ENCODE measurements at regions of chr3 and their contacts with region 1.

Region 1: DNA sequence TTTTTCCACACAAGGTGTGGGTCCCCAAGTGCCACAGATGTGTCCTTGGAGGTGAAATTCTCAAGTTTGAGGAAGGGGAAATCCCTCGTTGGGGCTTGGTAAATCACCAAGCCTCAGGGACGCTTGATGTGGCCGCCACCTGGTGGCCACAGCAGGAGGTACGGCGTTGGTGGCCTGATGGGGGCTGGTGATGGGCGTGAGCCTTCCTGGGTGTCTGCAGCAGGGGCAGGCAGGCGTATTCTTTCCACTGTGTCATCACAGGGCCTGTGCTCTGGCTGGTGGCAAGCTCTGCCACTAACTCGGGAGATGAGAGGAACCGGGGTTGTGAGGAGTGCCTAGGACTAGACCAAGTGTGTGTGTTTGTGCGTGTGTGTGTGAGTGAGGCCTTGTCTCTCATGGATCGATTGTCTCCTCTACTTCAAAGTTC is 4.2 kb downstream of the ACOX2 start:
- DNase-seq: peak; percentile 71 to 79 (median 75)
- H3K4me3 ChIP-seq: no peak overlapping the region
- H3K4me3 Mint-ChIP-seq: no peak overlapping the region
- H3K27ac ChIP-seq: no peak overlapping the region
- H3K27ac Mint-ChIP-seq: peak overlapping the region in 6 of 7 donors; percentile 16 to 87 (median 69)
- H3K4me1 ChIP-seq: peaks cover 9% of the 10 kb centered on the region
- H3K4me1 Mint-ChIP-seq: peaks cover 4 to 8% (median 7%) of the 10 kb centered on the region in 4 donors
- H3K27me3 ChIP-seq: no peaks in the 10 kb centered on the region
- H3K27me3 Mint-ChIP-seq: no peaks in the 10 kb centered on the region

Region 2: DNA sequence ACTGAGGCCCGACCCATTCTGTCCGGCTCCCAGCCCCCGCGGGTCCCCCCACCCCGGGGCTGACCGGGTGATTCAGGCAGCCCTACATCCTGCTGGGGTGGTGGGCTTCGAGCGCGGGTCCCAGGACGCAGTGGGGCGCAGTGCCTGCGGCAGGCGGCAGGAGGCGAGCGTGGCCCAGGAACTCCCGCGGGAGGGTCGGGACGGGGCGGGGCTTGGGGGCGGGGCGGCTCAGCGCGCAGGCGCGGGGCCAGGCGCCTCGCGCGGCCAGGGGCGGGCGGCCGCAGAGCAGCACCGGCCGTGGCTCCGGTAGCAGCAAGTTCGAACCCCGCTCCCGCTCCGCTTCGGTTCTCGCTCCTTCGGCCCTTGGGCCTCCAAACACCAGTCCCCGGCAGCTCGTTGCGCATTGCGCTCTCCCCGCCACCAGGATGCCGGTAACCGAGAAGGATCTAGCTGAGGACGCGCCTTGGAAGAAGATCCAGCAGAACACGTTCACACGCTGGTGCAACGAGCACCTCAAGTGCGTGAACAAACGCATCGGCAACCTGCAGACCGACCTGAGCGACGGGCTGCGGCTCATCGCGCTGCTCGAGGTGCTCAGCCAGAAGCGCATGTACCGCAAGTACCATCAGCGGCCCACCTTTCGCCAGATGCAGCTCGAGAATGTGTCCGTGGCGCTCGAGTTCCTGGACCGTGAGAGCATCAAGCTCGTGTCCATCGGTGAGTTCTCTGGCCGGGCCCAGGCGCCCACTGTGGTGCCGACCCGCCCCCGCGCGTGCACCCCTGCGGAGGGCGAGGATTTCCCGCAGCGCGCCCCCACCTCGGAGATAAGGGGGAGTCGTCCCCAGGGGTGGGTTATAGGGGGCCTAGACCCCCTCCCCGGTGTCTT is 524.4 kb before region 1 on chr3 and contains the start of gene FLNB:
- CTCF ChIA-PET with region 1: no interaction called
- POLR2A ChIA-PET with region 1: no interaction called
- intact Hi-C with region 1: no loop called
- DNase-seq: peak; percentile 72 to 78 (median 75)
- H3K4me3 ChIP-seq: peak within 1 kb of the TSS; percentile 65 to 100
- H3K4me3 Mint-ChIP-seq: peak within 1 kb of the TSS; percentile 83 to 94 (median 90)
- H3K27ac ChIP-seq: peak within 1 kb of the TSS; percentile 51
- H3K27ac Mint-ChIP-seq: peak within 1 kb of the TSS; percentile 47 to 92 (median 88)
- H3K4me1 ChIP-seq: peaks cover 31% of the 10 kb centered on the region
- H3K4me1 Mint-ChIP-seq: peaks cover 19 to 48% (median 30%) of the 10 kb centered on the region in 4 donors
- H3K27me3 ChIP-seq: no peaks in the 10 kb centered on the region
- H3K27me3 Mint-ChIP-seq: no peaks in the 10 kb centered on the region
- total RNA-seq, gene FLNB: 22.5 to 28.5 TPM

Region 3: GRCh38 chr3:58237238-58237940 is 295.4 kb before region 1 on chr3 and contains the start of gene ABHD6:
- CTCF ChIA-PET with region 1: no interaction called
- POLR2A ChIA-PET with region 1: no interaction called
- intact Hi-C with region 1: loop called (anchors 2 kb)
- DNase-seq: peak; percentile 72 to 93 (median 88)
- H3K4me3 ChIP-seq: peak within 1 kb of the TSS; percentile 58
- H3K4me3 Mint-ChIP-seq: peak within 1 kb of the TSS; percentile 88 to 96 (median 92)
- H3K27ac ChIP-seq: peak within 1 kb of the TSS; percentile 62
- H3K27ac Mint-ChIP-seq: peak within 1 kb of the TSS; percentile 85 to 92 (median 91)
- H3K4me1 ChIP-seq: peaks cover 12% of the 10 kb centered on the region
- H3K4me1 Mint-ChIP-seq: peaks cover 7 to 21% (median 12%) of the 10 kb centered on the region in 4 donors
- H3K27me3 ChIP-seq: no peaks in the 10 kb centered on the region
- H3K27me3 Mint-ChIP-seq: peaks cover 3 to 4% of the 10 kb centered on the region in 2 donors
- total RNA-seq, gene ABHD6: 5.1 to 7.2 TPM

Region 4: GRCh38 chr3:58324391-58325390 is 208.1 kb before region 1 on chr3:
- CTCF ChIA-PET with region 1: interaction called, 15 read pairs
- POLR2A ChIA-PET with region 1: no interaction called
- intact Hi-C with region 1: loop called (anchors 1 kb)
- DNase-seq: peak; percentile 15 to 51 (median 39)
- H3K4me3 ChIP-seq: no peak overlapping the region
- H3K4me3 Mint-ChIP-seq: peak overlapping the region in 1 of 8 donors; percentile 7
- H3K27ac ChIP-seq: no peak overlapping the region
- H3K27ac Mint-ChIP-seq: peak overlapping the region; percentile 76 to 87 (median 79)
- H3K4me1 ChIP-seq: peaks cover 18% of the 10 kb centered on the region
- H3K4me1 Mint-ChIP-seq: peaks cover 7 to 25% (median 17%) of the 10 kb centered on the region in 4 donors
- H3K27me3 ChIP-seq: no peaks in the 10 kb centered on the region
- H3K27me3 Mint-ChIP-seq: no peaks in the 10 kb centered on the region

Region 5: GRCh38 chr3:58463181-58463941 is 69.4 kb before region 1 on chr3:
- CTCF ChIA-PET with region 1: interaction called, 8 read pairs
- POLR2A ChIA-PET with region 1: interaction called, 3 read pairs
- intact Hi-C with region 1: loop called (anchors 1 kb)
- DNase-seq: peak; percentile 41 to 67 (median 54)
- H3K4me3 ChIP-seq: no peak overlapping the region
- H3K4me3 Mint-ChIP-seq: peak overlapping the region in 6 of 8 donors; percentile 8 to 56 (median 25)
- H3K27ac ChIP-seq: no peak overlapping the region
- H3K27ac Mint-ChIP-seq: peak overlapping the region in 2 of 7 donors; percentile 41 to 79
- H3K4me1 ChIP-seq: peaks cover 7% of the 10 kb centered on the region
- H3K4me1 Mint-ChIP-seq: peaks cover 2 to 7% (median 7%) of the 10 kb centered on the region in 4 donors
- H3K27me3 ChIP-seq: no peaks in the 10 kb centered on the region
- H3K27me3 Mint-ChIP-seq: peaks cover 0 to 3% of the 10 kb centered on the region in 2 donors

Region 6: DNA sequence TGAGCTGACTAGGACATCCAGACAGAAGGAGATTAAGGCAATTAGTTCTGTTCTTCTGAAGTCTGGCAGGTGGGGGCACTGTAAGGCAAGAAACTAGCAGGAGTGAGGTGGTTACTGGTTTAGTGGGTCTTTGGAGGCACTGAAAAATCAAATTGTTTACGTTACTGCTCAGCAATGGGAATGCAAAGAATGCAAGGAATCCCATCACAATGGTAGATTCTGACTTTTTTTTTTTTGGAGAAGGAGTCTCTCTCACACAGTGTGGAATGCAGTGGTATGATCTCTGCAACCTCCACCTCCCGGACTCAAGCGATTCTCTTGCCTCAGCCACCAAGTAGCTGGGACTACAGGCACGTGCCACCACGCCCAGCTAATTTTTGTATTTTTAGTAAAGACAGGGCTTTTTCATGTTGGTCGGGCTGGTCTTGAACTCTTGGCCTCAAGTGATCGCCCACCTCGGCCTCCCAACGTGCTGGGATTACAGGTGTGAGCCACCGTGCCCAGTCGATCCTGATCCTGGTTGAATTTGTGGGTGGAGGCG is 28.0 kb after region 1 on chr3:
- CTCF ChIA-PET with region 1: no interaction called
- POLR2A ChIA-PET with region 1: no interaction called
- intact Hi-C with region 1: no loop called
- DNase-seq: no peak
- H3K4me3 ChIP-seq: no peak overlapping the region
- H3K4me3 Mint-ChIP-seq: no peak overlapping the region
- H3K27ac ChIP-seq: no peak overlapping the region
- H3K27ac Mint-ChIP-seq: peak overlapping the region in 1 of 7 donors; percentile 43
- H3K4me1 ChIP-seq: no peaks in the 10 kb centered on the region
- H3K4me1 Mint-ChIP-seq: no peaks in the 10 kb centered on the region
- H3K27me3 ChIP-seq: no peaks in the 10 kb centered on the region
- H3K27me3 Mint-ChIP-seq: peaks cover 2 to 3% of the 10 kb centered on the region in 2 donors